Endothelial cell of umbilical vein (primary cell): ENCODE measurements at regions of chr7 and their contacts with region 1.

Region 1: GRCh38 chr7:142782922-142783900 is 12.4 kb downstream of the PRSS2 start:
- DNase-seq: peak; percentile 88
- H3K4me3 ChIP-seq: peak overlapping the region; percentile 32 to 55 (median 49)
- H3K27ac ChIP-seq: no peak overlapping the region
- H3K4me1 ChIP-seq: peaks cover 3% of the 10 kb centered on the region
- H3K27me3 ChIP-seq: no peaks in the 10 kb centered on the region
- CTCF ChIP-seq: peak; percentile 92 to 98
- POLR2A ChIP-seq: no peak

Region 2: GRCh38 chr7:142516038-142516501 is 267.1 kb before region 1 on chr7:
- CTCF ChIA-PET with region 1: interaction called, 46 read pairs
- POLR2A ChIA-PET with region 1: no interaction called
- dilution Hi-C with region 1: no loop called
- intact Hi-C with region 1: loop called (anchors 5 kb)
- DNase-seq: peak; percentile 65
- H3K4me3 ChIP-seq: no peak overlapping the region
- H3K27ac ChIP-seq: no peak overlapping the region
- H3K4me1 ChIP-seq: no peaks in the 10 kb centered on the region
- H3K27me3 ChIP-seq: peaks cover 9 to 13% of the 10 kb centered on the region in 2 experiments
- CTCF ChIP-seq: peak; percentile 75 to 79
- POLR2A ChIP-seq: no peak

Region 3: DNA sequence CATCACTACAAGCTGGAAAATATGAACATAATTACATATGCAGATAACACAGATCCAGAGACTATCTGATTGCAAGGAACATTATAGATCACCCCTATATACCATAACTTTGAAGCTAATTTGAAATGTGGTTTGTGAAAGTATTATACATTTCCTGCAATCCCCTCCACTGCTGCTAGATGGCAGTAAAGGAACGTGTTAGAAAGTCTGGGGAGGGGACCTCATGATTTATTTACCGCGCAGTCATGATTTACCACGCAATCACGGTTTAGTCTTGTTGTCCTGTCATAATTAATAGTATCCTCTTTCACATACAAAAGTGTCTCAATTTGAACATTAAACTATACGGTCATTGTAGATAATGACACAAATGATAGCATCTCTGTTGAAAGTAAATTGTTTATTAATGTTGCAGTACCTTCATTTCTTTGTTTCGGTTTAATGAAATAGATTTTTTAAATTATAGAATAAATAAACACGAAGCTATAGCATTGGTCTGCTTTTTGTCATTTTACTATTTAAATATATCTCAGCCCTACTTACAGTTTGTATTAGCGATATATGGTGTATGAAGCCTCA is 179.3 kb before region 1 on chr7:
- CTCF ChIA-PET with region 1: interaction called, 80 read pairs
- POLR2A ChIA-PET with region 1: no interaction called
- dilution Hi-C with region 1: no loop called
- intact Hi-C with region 1: loop called (anchors 1 kb)
- DNase-seq: peak; percentile 71
- H3K4me3 ChIP-seq: peak overlapping the region in 2 of 3 experiments; percentile 45 to 68
- H3K27ac ChIP-seq: no peak overlapping the region
- H3K4me1 ChIP-seq: peaks cover 7% of the 10 kb centered on the region
- H3K27me3 ChIP-seq: no peaks in the 10 kb centered on the region
- CTCF ChIP-seq: peak; percentile 67 to 75
- POLR2A ChIP-seq: no peak

Region 4: GRCh38 chr7:142654398-142654797 is 128.8 kb before region 1 on chr7:
- CTCF ChIA-PET with region 1: interaction called, 39 read pairs
- POLR2A ChIA-PET with region 1: no interaction called
- dilution Hi-C with region 1: no loop called
- intact Hi-C with region 1: loop called (anchors 1 kb)
- DNase-seq: no peak
- H3K4me3 ChIP-seq: no peak overlapping the region
- H3K27ac ChIP-seq: no peak overlapping the region
- H3K4me1 ChIP-seq: no peaks in the 10 kb centered on the region
- H3K27me3 ChIP-seq: peaks cover 12 to 16% of the 10 kb centered on the region in 2 experiments
- CTCF ChIP-seq: peak in 1 of 2 donors; percentile 4
- POLR2A ChIP-seq: no peak

Region 5: GRCh38 chr7:142711746-142712619 is 71.2 kb before region 1 on chr7:
- CTCF ChIA-PET with region 1: interaction called, 213 read pairs
- POLR2A ChIA-PET with region 1: no interaction called
- dilution Hi-C with region 1: no loop called
- intact Hi-C with region 1: loop called (anchors 1 kb)
- DNase-seq: peak; percentile 44
- H3K4me3 ChIP-seq: no peak overlapping the region
- H3K27ac ChIP-seq: no peak overlapping the region
- H3K4me1 ChIP-seq: peaks cover 20% of the 10 kb centered on the region
- H3K27me3 ChIP-seq: peaks cover 7 to 16% of the 10 kb centered on the region in 2 experiments
- CTCF ChIP-seq: peak; percentile 52 to 69
- POLR2A ChIP-seq: no peak

Region 6: GRCh38 chr7:142754681-142755575 is 28.3 kb before region 1 on chr7:
- CTCF ChIA-PET with region 1: interaction called, 15 read pairs
- POLR2A ChIA-PET with region 1: no interaction called
- dilution Hi-C with region 1: no loop called
- intact Hi-C with region 1: no loop called
- DNase-seq: peak; percentile 50
- H3K4me3 ChIP-seq: no peak overlapping the region
- H3K27ac ChIP-seq: no peak overlapping the region
- H3K4me1 ChIP-seq: peaks cover 3% of the 10 kb centered on the region
- H3K27me3 ChIP-seq: peaks cover 6 to 13% of the 10 kb centered on the region in 2 experiments
- CTCF ChIP-seq: no peak
- POLR2A ChIP-seq: no peak

Region 7: DNA sequence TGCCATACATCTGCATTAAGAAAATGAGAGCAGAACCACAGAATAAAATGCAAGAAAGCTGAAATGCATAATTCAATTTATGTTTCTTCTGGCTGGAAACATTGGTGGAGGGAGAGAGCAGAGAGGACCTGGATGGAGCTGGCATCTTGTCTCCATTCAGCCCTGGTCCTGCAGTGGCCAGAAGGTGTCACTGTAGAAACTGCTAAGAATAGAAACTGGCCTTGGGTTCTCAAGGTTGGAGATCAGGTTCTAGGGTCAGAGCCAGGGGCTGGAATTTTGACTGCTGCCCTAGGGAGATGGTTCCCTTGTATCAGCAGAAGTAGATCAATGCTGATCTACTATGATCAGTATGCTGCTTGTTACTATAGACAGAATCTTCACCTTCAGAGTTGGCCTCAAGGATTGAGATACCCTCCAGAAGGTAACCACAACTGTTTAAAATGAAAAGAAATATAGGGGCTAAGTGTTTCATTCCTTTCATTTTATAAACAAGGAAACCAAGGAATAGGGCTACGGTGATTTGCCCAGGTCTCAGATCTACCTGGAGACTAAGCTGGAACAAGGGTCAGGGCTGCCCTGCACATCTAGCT is 707.6 kb after region 1 on chr7:
- CTCF ChIA-PET with region 1: no interaction called
- POLR2A ChIA-PET with region 1: no interaction called
- dilution Hi-C with region 1: no loop called
- intact Hi-C with region 1: no loop called
- DNase-seq: peak; percentile 58
- H3K4me3 ChIP-seq: no peak overlapping the region
- H3K27ac ChIP-seq: peak overlapping the region; percentile 99
- H3K4me1 ChIP-seq: peaks cover 43% of the 10 kb centered on the region
- H3K27me3 ChIP-seq: no peaks in the 10 kb centered on the region
- CTCF ChIP-seq: peak; percentile 60 to 66
- POLR2A ChIP-seq: no peak